Calu3 (cell line): ENCODE measurements at regions of chr22 and their contacts with region 1.

Region 1: GRCh38 chr22:42070517-42071422 is at the start of gene NAGA:
- DNase-seq: peak; percentile 95
- H3K4me3 Mint-ChIP-seq: peak within 1 kb of the TSS; percentile 75
- H3K27ac Mint-ChIP-seq: peak within 1 kb of the TSS; percentile 67
- H3K4me1 Mint-ChIP-seq: no peaks in the 10 kb centered on the region
- H3K27me3 Mint-ChIP-seq: no peaks in the 10 kb centered on the region
- CTCF ChIP-seq: no peak
- total RNA-seq, gene NAGA: 24.3 and 27.2 TPM in 2 replicates

Region 2: GRCh38 chr22:41946629-41947423 is 123.9 kb before region 1 on chr22 and contains the start of gene CENPM:
- CTCF ChIA-PET with region 1: no interaction called
- intact Hi-C with region 1: loop called (anchors 5 kb)
- DNase-seq: peak; percentile 97
- H3K4me3 Mint-ChIP-seq: peak within 1 kb of the TSS; percentile 79
- H3K27ac Mint-ChIP-seq: peak within 1 kb of the TSS; percentile 62
- H3K4me1 Mint-ChIP-seq: peaks cover 52% of the 10 kb centered on the region
- H3K27me3 Mint-ChIP-seq: no peaks in the 10 kb centered on the region
- CTCF ChIP-seq: no peak
- total RNA-seq, gene CENPM: 46.7 and 69.3 TPM in 2 replicates

Region 3: DNA sequence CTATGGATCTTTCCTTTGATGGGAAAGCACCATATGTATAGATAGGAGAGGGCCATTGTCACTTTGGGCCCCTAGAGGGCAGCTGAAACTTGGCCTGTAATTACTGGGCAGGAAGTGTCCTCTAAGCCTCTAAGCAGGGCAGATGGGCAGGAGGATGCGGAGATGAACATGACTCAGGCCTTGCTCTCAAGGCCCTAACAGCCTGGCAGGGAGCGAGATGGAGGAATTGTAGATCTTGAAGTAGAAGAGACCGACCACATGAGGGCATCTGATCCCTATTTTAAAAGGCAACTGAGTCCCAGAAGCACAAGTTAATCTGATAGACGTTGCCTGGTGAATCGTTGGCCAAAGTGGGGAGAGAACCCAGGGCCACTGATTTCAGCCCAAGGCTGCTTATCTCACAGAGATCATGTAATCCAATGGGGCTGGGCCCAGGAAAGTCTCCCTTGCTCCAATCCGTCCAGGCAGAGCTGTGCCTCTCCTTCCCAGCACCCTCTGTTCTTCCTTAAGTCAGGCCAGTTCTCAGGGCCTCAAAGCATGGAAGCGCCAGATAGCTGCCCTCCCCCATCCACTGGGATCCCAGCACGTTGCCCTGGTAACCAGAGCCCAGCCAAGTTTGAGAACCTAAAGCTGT is 104.0 kb before region 1 on chr22:
- CTCF ChIA-PET with region 1: no interaction called
- intact Hi-C with region 1: loop called (anchors 5 kb)
- DNase-seq: peak; percentile 45
- H3K4me3 Mint-ChIP-seq: no peak overlapping the region
- H3K27ac Mint-ChIP-seq: no peak overlapping the region
- H3K4me1 Mint-ChIP-seq: peaks cover 7% of the 10 kb centered on the region
- H3K27me3 Mint-ChIP-seq: peaks cover 26% of the 10 kb centered on the region
- CTCF ChIP-seq: no peak

Region 4: DNA sequence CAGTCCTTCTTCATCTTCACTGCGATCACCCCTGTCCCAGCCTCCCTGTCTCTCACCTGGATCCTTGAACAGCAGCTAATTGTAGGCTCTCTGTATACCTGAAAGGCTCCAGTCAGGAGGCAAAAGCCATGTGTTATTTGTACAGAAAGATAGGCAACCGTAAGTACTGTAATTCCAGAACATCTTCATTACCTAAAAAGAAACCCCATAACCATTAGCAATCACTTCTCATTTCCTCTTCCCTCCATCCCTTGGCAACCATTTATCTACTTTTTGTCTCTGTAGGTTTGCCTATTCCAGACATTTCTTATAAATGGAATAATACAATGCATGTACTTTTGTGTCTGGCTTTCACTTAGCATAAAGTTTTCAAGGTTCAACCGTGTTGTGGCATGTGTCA is 18.0 kb before region 1 on chr22:
- CTCF ChIA-PET with region 1: no interaction called
- intact Hi-C with region 1: no loop called
- DNase-seq: no peak
- H3K4me3 Mint-ChIP-seq: no peak overlapping the region
- H3K27ac Mint-ChIP-seq: no peak overlapping the region
- H3K4me1 Mint-ChIP-seq: no peaks in the 10 kb centered on the region
- H3K27me3 Mint-ChIP-seq: no peaks in the 10 kb centered on the region
- CTCF ChIP-seq: no peak